CD14-positive monocyte (primary cell): ENCODE measurements at regions of chr9 and their contacts with region 1.

Region 1: GRCh38 chr9:121267689-121268597 is at the start of gene GSN:
- DNase-seq: peak in 1 of 3 donors; percentile 31
- H3K4me3 ChIP-seq: peak within 1 kb of the TSS; percentile 65 to 83 (median 81)
- H3K4me3 Mint-ChIP-seq: peak within 1 kb of the TSS; percentile 87 to 95
- H3K27ac ChIP-seq: peak within 1 kb of the TSS; percentile 31 to 54
- H3K27ac Mint-ChIP-seq: peak within 1 kb of the TSS; percentile 71 to 90 (median 85)
- H3K4me1 ChIP-seq: peaks cover 67 to 70% of the 10 kb centered on the region in 2 donors
- H3K4me1 Mint-ChIP-seq: peaks cover 70% of the 10 kb centered on the region
- H3K27me3 ChIP-seq: no peaks in the 10 kb centered on the region
- H3K27me3 Mint-ChIP-seq: peaks cover 0 to 1% (median 0%) of the 10 kb centered on the region in 3 donors
- CTCF ChIP-seq: no peak
- polyA plus RNA-seq, gene GSN: 67.4 to 187 (median 95.8) TPM

Region 2: GRCh38 chr9:121213136-121213806 is 54.7 kb before region 1 on chr9:
- intact Hi-C with region 1: loop called (anchors 5 to 10 kb)
- DNase-seq: peak; percentile 67 to 89 (median 83)
- H3K4me3 ChIP-seq: no peak overlapping the region
- H3K4me3 Mint-ChIP-seq: no peak overlapping the region
- H3K27ac ChIP-seq: no peak overlapping the region
- H3K27ac Mint-ChIP-seq: peak overlapping the region in 4 of 7 donors; percentile 19 to 71 (median 32)
- H3K4me1 ChIP-seq: peaks cover 24 to 27% of the 10 kb centered on the region in 2 donors
- H3K4me1 Mint-ChIP-seq: peaks cover 26% of the 10 kb centered on the region
- H3K27me3 ChIP-seq: no peaks in the 10 kb centered on the region
- H3K27me3 Mint-ChIP-seq: peaks cover 0 to 4% (median 0%) of the 10 kb centered on the region in 3 donors
- CTCF ChIP-seq: peak; percentile 97

Region 3: DNA sequence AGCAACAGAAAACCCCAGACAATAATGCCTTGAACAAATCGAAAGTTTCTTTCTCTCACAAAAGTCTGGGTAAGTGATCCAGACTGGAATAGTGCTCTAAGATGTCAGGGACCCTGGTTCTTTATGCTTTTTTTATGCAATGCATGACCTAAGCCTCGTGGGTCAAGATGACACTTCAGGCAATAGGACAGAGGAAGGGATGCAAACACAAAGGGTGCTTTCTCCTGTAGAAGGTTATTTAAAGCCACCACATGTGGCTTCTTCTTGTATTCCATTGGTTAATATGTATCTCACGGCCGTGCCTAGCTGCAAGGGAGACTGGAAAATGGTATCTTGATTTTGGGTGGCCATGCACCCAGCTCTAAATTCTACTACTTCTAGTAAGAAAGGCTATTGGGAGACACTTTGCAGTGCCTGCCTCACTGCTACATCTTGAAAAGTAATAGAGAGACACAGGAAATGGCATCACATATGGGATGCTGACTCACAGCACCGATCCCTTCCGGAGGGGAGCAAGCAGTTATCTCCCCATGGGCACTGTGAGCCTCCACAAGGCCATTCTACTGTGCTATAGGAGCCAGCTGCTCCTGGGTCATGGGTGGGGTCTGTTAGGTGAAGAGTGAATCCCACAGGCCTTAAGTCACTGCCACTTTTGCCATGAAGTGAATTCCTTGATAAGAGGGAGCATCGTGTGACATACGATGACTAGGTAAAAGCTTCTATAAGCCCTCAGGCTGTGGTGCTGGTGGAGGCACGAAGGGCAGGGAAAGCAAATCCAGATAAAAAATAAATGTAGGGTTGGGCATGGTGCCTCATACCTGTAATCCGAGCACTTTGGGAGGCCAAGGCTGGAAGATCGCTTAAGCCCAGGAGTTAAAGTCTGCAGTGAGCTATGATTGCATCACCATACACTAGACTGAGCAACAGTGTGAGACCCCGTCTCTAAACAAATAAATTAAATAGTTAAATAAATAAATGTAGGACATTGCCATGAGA is 33.7 kb before region 1 on chr9:
- intact Hi-C with region 1: loop called (anchors 5 kb)
- DNase-seq: peak; percentile 62 to 83 (median 81)
- H3K4me3 ChIP-seq: peak overlapping the region in 1 of 3 experiments; percentile 38
- H3K4me3 Mint-ChIP-seq: peak overlapping the region; percentile 9 to 70
- H3K27ac ChIP-seq: peak overlapping the region in 1 of 2 donors; percentile 64
- H3K27ac Mint-ChIP-seq: peak overlapping the region; percentile 46 to 85 (median 78)
- H3K4me1 ChIP-seq: peaks cover 39 to 59% of the 10 kb centered on the region in 2 donors
- H3K4me1 Mint-ChIP-seq: peaks cover 52% of the 10 kb centered on the region
- H3K27me3 ChIP-seq: no peaks in the 10 kb centered on the region
- H3K27me3 Mint-ChIP-seq: no peaks in the 10 kb centered on the region
- CTCF ChIP-seq: no peak

Region 4: GRCh38 chr9:121253821-121254471 is 14.0 kb before region 1 on chr9:
- intact Hi-C with region 1: loop called in 1 of 2 experiments (anchors 2 kb)
- DNase-seq: peak in 2 of 3 donors; percentile 51 to 69
- H3K4me3 ChIP-seq: peak overlapping the region in 1 of 3 experiments; percentile 45
- H3K4me3 Mint-ChIP-seq: peak overlapping the region in 1 of 2 donors; percentile 73
- H3K27ac ChIP-seq: peak overlapping the region; percentile 4 to 13
- H3K27ac Mint-ChIP-seq: peak overlapping the region; percentile 79 to 90 (median 86)
- H3K4me1 ChIP-seq: peaks cover 56 to 62% of the 10 kb centered on the region in 2 donors
- H3K4me1 Mint-ChIP-seq: peaks cover 50% of the 10 kb centered on the region
- H3K27me3 ChIP-seq: no peaks in the 10 kb centered on the region
- H3K27me3 Mint-ChIP-seq: peaks cover 1 to 2% (median 1%) of the 10 kb centered on the region in 3 donors
- CTCF ChIP-seq: no peak